HAP-1 (cell line): ENCODE measurements at regions of chr1 and their contacts with region 1.

Region 1: DNA sequence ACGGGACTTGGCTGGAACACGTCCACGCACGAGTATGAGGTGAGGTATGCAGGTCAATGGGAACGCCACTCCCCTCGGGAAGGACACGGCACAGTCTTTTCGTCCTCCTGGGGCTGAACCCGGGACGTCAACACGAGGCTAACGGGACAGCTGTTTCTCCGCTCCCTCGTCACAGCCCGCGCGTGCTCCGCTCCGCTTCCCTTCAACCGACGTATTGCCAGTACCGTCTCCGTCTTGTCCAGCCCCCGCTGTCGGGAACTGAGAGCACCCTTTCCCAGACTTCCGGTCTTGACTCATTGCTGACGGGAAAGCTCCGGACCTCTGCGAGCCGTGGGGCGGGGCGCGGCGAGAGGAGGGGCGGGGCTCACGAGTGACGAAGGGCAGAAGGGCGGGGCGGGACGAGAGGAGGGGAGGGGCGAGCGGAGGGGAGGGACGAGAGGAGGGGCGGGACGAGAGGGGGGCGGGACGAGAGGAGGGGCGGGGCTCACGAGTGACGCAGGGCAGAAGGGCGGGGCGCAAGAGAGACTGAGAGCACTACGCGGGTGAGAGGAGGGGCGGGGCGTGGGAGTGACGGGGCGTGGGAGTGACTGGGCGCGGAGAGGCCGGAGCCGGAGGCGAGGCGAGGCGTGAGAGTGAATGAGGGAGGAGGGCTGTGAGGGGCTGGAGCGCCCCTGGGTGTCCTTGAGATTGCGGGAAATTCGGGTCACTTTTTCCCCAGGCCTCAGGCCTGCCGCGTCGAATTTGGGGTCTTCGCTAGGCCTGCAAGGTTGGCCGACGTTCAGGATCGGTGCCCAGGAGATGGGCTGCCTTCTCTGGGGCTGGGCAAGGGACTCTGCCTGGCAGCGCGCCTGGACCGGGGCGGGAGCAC is 22.2 kb upstream of the CFAP126 start:
- DNase-seq: peak; percentile 88 to 98
- H3K4me3 ChIP-seq: peak overlapping the region; percentile 68
- H3K4me1 ChIP-seq: peaks cover 13% of the 10 kb centered on the region
- H3K27me3 ChIP-seq: no peaks in the 10 kb centered on the region; the same call in 1 of the 2 replicates

Region 2: GRCh38 chr1:161439280-161440232 is 49.6 kb after region 1 on chr1:
- in situ Hi-C with region 1: loop called (anchors 5 kb)
- DNase-seq: peak in 1 of 2 experiments; percentile 60
- H3K4me3 ChIP-seq: peak overlapping the region; percentile 16
- H3K4me1 ChIP-seq: peaks cover 3% of the 10 kb centered on the region; the same call in 1 of the 2 replicates
- H3K27me3 ChIP-seq: no peaks in the 10 kb centered on the region

Region 3: GRCh38 chr1:161739865-161740566 is 350.1 kb after region 1 on chr1:
- in situ Hi-C with region 1: loop called (anchors 5 kb)
- DNase-seq: no peak
- H3K4me3 ChIP-seq: no peak overlapping the region
- H3K4me1 ChIP-seq: no peaks in the 10 kb centered on the region
- H3K27me3 ChIP-seq: no peaks in the 10 kb centered on the region